ENCODE measurements at regions of chr15 and their contacts with region 1.

Region 1: DNA sequence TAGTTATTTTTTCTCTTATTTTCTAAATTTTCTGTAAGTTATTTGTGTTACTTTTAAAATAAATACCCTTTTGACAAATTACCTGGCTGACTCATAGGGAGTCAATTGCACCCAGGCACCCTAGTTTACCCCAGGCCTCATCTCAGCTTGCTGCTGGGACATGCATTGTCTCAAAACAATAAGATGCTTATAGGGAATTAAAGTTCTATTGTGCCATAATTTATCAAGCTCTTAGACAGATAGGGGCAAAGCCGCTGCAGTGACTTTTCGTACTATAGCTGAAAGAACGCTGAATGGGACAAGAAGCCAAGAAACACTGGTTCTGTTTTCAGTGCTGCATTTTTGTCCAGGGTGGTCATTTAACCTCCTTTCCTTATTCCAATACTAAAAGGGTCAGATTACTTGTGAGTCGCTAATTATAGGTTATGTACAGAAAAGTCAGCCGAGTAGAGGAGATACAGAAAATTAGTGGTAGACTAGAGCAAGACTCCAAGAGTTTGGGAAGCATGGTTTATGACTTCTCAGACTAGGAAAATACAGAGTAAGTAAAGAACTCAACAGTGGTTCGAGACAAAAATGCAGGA is 50.3 kb downstream of the EXD1 start:
- DNase-seq: no peak
- H3K4me3 Mint-ChIP-seq: no peak overlapping the region
- H3K27ac Mint-ChIP-seq: no peak overlapping the region
- H3K4me1 Mint-ChIP-seq: peaks cover 1% of the 10 kb centered on the region
- H3K27me3 Mint-ChIP-seq: peaks cover 7% of the 10 kb centered on the region

Region 2: DNA sequence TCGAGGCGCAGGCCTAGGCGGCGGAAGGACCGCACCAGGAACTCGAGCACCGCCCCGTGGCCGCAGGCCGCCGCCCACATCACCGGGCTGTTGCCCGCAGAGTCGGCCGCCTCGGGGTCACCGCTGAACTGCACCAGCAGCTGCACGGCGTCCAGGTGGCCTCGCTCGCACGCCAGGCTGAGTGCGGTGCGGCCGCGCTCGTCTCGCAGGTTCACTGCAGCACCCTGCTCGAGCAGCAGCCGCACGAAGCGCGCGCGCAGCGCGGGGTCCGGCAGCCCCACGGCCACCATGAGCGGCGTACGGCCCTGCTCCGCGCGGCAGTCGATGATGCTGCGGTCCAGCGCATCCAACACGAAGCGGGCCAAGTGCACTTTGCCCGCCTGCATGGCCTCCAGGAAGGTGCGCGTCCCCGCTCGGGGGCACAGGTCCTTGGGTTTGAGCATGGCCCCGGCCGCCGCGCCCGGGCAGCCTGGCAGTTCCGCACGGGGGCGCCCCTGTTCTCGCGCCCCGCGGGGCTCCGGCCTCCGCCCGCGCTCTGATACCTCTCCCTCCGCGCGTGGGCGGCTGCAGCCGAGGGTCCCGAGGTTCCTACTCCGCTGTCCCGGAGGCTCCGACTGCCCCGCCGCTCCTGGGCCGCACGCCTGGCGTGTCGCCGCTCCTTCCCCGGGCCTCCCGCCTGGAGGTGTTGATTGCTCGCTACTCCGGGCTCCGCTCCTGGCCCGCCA is 898.0 kb before region 1 on chr15:
- intact Hi-C with region 1: no loop called
- DNase-seq: peak; percentile 48
- H3K4me3 Mint-ChIP-seq: peak overlapping the region; percentile 60
- H3K27ac Mint-ChIP-seq: no peak overlapping the region
- H3K4me1 Mint-ChIP-seq: peaks cover 4% of the 10 kb centered on the region
- H3K27me3 Mint-ChIP-seq: peaks cover 40% of the 10 kb centered on the region

Region 3: GRCh38 chr15:41022487-41023090 is 157.7 kb before region 1 on chr15:
- intact Hi-C with region 1: loop called (anchors 10 kb)
- DNase-seq: peak; percentile 24
- H3K4me3 Mint-ChIP-seq: no peak overlapping the region
- H3K27ac Mint-ChIP-seq: no peak overlapping the region
- H3K4me1 Mint-ChIP-seq: peaks cover 2% of the 10 kb centered on the region
- H3K27me3 Mint-ChIP-seq: no peaks in the 10 kb centered on the region